ENCODE measurements at regions of chr10 and their contacts with region 1.

Region 1: DNA sequence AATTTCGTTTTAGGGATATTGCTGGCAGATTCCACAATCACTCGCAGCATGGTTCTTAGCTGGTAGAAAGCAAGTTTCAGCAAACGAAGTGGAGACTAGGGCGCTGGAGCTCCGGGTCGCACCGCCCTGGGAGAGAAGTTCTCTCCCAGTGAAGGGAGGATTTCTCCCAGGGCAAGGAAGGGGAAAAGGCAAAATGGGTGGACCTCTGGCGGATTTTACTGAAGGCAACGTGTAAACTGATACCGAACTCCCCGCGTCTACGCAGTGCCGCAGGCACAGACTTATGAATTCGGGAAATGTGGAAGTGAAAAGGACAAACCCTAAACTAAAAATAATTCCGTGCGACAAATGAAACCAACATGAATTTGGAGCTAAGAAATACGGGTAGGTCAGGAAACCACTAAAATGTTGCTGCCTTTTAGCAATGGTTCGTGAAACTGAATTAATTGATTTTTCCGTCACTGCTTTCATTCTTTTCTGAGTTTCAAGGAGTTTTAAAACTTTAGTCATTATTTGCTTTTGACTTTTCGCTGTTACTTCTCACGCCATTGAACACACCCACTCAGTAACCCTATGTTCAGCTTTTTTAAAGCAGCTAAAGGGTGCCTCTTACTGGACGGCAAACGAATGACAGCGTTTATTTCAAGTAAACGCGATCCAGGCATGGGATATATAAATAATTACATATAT is at the start of gene MYOF:
- DNase-seq: peak; percentile 68
- H3K4me3 Mint-ChIP-seq: peak within 1 kb of the TSS; percentile 80
- H3K27ac Mint-ChIP-seq: no peak within 1 kb of the TSS
- H3K4me1 Mint-ChIP-seq: peaks cover 14% of the 10 kb centered on the region
- H3K27me3 Mint-ChIP-seq: peaks cover 23% of the 10 kb centered on the region

Region 2: DNA sequence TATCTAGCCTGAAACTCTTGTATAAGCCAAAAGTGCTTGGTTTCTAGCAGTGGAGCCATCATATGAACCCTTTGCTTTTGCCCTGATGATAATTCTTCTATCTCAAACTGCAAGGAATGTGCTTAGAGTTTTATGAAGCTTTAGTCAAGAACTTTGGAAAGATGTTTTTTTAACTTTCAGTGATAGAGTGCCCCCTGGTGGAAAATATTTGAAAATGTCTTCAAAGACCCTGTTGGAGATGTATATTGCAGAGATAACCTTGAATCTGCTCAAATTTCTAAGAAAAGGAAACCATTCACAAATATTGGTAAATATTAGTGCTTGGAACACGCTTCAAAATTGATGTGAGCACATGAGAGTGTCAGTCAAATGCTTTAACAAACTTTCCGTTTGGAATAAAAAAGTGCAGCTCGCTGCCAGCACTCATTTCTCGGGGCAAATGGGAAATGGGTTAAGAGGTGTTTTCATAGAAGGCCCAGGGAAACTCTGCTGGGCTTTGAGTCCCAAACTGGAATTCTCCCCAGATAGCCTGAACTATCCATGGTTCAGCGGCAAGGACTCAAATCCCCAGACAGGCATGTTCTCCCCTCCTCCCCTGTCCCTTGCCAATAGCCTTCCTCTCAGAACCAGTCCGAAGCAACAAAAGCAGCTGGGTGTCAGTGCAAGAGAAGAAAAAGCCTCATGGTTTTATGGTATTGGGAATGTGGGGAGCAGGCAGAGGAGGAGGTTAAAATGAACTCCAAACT is 129.5 kb before region 1 on chr10:
- CTCF ChIA-PET with region 1: interaction called, 25 read pairs
- DNase-seq: no peak
- H3K4me3 Mint-ChIP-seq: no peak overlapping the region
- H3K27ac Mint-ChIP-seq: no peak overlapping the region
- H3K4me1 Mint-ChIP-seq: peaks cover 2% of the 10 kb centered on the region
- H3K27me3 Mint-ChIP-seq: peaks cover 3% of the 10 kb centered on the region

Region 3: DNA sequence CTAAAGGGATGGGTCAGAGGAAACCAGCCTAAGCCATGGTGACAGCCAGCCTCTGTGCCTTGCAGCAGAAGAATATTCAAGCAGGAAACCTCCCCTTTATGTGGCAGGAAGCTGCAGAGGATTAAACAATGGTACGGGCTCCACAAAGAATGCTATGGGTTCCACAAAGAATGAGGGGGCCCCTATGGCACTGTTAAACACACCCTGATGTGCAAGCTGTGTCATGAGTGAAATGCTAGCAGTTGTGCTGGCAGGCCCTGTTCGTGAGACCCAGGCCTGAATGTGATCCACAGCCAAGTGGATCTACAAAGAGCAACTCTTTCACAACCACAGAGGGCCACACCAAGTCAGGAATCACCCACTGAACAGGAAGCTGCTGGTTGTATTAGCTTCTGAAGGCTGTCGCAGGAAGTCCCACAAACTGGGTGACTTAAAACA is 69.0 kb before region 1 on chr10:
- CTCF ChIA-PET with region 1: interaction called, 26 read pairs
- DNase-seq: peak; percentile 67
- H3K4me3 Mint-ChIP-seq: peak overlapping the region; percentile 22
- H3K27ac Mint-ChIP-seq: peak overlapping the region; percentile 97
- H3K4me1 Mint-ChIP-seq: peaks cover 59% of the 10 kb centered on the region
- H3K27me3 Mint-ChIP-seq: no peaks in the 10 kb centered on the region

Region 4: DNA sequence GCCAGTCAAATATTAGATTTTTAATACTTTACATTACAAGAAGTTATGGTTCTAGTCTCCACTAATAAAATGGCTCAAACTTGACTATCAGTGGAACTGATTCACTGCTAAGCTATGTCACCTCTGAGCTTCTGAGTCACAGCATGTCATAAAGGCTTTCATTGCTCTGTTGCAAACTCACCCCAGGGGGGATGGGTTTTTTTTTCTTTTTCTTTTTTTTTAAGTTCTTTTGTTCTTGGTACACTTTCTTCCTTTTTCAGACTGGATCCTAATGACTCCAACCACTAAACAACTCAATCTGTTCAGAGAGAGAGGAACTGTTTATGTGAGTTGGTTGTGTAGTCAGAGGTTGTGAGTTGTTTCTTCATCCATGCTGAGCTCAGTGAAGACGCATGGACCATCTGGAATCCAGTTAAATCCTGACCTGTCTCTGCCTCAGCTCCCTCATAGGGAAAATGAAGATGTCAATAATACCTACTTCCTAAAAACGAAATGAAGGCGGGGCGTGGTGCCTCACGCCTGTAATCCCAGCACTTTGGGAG is 11.1 kb before region 1 on chr10:
- CTCF ChIA-PET with region 1: interaction called, 13 read pairs
- DNase-seq: no peak
- H3K4me3 Mint-ChIP-seq: no peak overlapping the region
- H3K27ac Mint-ChIP-seq: no peak overlapping the region
- H3K4me1 Mint-ChIP-seq: no peaks in the 10 kb centered on the region
- H3K27me3 Mint-ChIP-seq: no peaks in the 10 kb centered on the region

Region 5: DNA sequence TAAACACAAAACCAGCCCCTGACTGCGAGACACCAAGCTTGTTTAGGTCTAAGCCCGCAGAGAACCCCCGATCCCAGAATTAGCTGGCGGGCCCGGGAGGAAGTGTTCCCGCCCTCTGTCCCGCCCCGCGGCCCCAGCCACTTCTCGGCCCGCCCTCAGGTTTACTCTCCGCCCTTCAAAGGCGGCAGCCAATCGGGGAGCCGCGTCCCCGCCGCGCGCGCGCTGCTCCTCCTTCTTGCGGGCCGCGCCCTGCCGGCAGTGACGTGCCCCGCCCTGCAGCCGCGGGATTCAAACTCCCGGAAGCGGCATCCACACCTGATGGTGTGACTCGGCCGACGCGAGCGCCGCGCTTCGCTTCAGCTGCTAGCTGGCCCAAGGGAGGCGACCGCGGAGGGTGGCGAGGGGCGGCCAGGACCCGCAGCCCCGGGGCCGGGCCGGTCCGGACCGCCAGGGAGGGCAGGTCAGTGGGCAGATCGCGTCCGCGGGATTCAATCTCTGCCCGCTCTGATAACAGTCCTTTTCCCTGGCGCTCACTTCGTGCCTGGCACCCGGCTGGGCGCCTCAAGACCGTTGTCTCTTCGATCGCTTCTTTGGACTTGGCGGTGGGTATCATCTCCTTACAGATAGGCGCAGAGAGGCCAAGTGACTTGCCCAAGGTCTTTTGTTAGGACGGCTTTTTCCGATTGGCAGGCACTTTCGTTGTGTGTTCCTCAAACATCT is 14.2 kb after region 1 on chr10 and contains the start of gene CEP55:
- CTCF ChIA-PET with region 1: interaction called, 19 read pairs
- DNase-seq: peak; percentile 97
- H3K4me3 Mint-ChIP-seq: peak within 1 kb of the TSS; percentile 83
- H3K27ac Mint-ChIP-seq: peak within 1 kb of the TSS; percentile 92
- H3K4me1 Mint-ChIP-seq: peaks cover 45% of the 10 kb centered on the region
- H3K27me3 Mint-ChIP-seq: peaks cover 4% of the 10 kb centered on the region

Region 6: GRCh38 chr10:93512565-93512964 is 30.3 kb after region 1 on chr10:
- CTCF ChIA-PET with region 1: interaction called, 103 read pairs
- DNase-seq: no peak
- H3K4me3 Mint-ChIP-seq: no peak overlapping the region
- H3K27ac Mint-ChIP-seq: no peak overlapping the region
- H3K4me1 Mint-ChIP-seq: peaks cover 2% of the 10 kb centered on the region
- H3K27me3 Mint-ChIP-seq: no peaks in the 10 kb centered on the region

Region 7: DNA sequence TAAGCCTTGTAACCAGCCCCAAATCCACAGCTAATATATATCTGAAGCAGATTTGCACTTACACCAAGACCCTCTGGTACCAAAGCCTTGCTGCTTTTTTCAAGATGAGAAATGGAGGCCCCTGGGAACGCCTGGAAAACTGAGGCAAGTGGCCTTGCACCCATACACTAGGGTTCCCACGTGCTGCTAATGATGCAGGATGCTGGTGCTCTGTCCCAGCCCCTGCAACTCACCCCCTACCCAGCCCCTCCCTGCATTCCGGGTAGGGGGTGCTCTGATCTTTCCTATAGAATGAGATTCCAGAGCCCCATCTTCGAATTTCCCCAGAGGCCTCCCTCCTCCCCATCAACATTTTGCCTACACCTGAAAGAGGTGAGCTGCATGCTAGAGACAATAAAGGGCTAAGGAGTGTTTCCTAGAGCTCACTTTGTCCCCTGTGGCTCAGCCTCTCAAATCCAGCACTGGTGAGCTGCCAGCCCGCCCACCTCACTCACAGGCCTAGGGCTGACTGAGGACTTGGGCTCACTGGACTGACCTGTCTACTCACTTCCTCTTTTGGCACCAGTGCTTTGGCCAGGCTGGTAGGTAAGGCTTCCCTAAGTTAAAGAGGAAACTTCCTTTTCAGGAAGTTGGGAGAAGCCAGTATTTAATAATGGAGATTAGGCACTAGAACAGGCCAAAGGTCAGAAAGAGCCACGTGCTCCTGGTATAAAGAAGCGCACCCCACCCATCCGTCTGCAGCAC is 108.9 kb after region 1 on chr10:
- CTCF ChIA-PET with region 1: no interaction called
- DNase-seq: no peak
- H3K4me3 Mint-ChIP-seq: no peak overlapping the region
- H3K27ac Mint-ChIP-seq: no peak overlapping the region
- H3K4me1 Mint-ChIP-seq: no peaks in the 10 kb centered on the region
- H3K27me3 Mint-ChIP-seq: peaks cover 9% of the 10 kb centered on the region